PC-9 (cell line): ENCODE measurements at regions of chr11 and their contacts with region 1.

Region 1: DNA sequence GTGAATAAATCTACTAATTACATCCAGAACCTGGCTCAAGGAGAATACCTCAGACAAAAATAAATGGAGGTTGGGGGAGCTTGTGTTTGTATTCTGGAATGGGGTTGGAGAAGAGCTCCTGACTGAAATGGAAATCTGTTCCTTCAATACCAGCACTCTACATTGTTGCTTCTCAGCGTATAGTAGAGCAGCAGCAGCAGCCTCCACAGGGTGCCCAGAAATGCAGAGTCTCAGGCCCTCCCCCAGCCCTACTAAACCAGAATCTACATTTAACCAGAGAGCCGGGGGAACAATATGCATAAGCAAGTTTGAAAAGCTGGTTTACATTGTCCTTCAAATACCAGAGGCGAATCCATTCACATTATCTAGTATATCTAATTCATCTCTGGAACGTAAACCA is 474.8 kb downstream of the NTM start:
- DNase-seq: no peak
- H3K4me3 ChIP-seq: no peak overlapping the region
- H3K27ac ChIP-seq: no peak overlapping the region
- H3K4me1 ChIP-seq: no peaks in the 10 kb centered on the region
- H3K27me3 ChIP-seq: no peaks in the 10 kb centered on the region
- CTCF ChIP-seq: no peak

Region 2: GRCh38 chr11:133762538-133762937 is 1917.3 kb after region 1 on chr11:
- CTCF ChIA-PET with region 1: no interaction called
- POLR2A ChIA-PET with region 1: interaction called, 11 read pairs
- intact Hi-C with region 1: no loop called
- DNase-seq: no peak
- H3K4me3 ChIP-seq: no peak overlapping the region
- H3K27ac ChIP-seq: no peak overlapping the region
- H3K4me1 ChIP-seq: no peaks in the 10 kb centered on the region
- H3K27me3 ChIP-seq: no peaks in the 10 kb centered on the region
- CTCF ChIP-seq: no peak